ENCODE measurements at regions of chr1 and their contacts with region 1.

Region 1: DNA sequence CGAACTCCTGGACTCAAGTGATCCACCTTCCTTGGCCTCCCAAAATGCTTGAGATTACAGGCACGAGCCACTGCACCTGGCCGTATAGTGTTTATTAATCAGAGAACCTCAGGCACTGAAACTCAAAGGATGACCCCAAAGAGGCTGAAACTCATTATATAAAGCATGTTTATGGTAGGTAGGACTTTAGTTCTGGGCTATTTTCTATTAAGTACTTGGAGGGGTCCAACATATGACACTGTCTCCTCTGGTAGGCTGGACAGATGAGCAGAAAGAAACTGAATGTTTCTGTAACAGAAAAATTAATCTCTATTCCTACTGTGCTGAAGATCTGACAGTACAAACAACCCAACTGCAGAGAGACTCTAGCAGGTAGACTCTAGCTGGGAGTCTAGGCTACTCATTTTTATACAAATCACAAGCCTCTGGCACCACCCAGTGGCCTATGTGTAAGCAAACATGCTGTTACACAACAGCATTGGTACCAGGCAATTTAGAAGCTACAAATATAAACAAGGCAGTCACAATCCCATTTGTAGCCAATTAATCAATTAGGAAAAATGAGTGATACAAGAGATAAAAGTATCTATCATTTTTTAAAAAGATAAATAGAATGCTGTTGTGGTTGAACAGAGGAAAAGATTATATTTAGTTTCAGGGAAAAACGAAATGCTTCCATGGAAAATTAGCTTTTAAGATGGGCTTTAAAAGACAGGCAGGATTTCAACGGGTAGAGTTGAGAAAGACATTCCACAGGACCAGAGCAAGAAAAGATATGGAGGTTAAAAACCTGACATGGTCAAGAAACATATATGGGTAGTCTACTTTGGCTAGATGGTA is 10.4 kb downstream of the DCAF8 start:
- DNase-seq: peak; percentile 61
- H3K4me3 Mint-ChIP-seq: no peak overlapping the region
- H3K27ac Mint-ChIP-seq: no peak overlapping the region
- H3K4me1 Mint-ChIP-seq: peaks cover 7% of the 10 kb centered on the region
- H3K27me3 Mint-ChIP-seq: no peaks in the 10 kb centered on the region
- CTCF ChIP-seq: peak; percentile 70

Region 2: GRCh38 chr1:159996653-159997052 is 255.3 kb before region 1 on chr1:
- CTCF ChIA-PET with region 1: no interaction called
- intact Hi-C with region 1: no loop called
- DNase-seq: peak; percentile 16
- H3K4me3 Mint-ChIP-seq: no peak overlapping the region
- H3K27ac Mint-ChIP-seq: no peak overlapping the region
- H3K4me1 Mint-ChIP-seq: peaks cover 9% of the 10 kb centered on the region
- H3K27me3 Mint-ChIP-seq: peaks cover 31% of the 10 kb centered on the region
- CTCF ChIP-seq: no peak

Region 3: DNA sequence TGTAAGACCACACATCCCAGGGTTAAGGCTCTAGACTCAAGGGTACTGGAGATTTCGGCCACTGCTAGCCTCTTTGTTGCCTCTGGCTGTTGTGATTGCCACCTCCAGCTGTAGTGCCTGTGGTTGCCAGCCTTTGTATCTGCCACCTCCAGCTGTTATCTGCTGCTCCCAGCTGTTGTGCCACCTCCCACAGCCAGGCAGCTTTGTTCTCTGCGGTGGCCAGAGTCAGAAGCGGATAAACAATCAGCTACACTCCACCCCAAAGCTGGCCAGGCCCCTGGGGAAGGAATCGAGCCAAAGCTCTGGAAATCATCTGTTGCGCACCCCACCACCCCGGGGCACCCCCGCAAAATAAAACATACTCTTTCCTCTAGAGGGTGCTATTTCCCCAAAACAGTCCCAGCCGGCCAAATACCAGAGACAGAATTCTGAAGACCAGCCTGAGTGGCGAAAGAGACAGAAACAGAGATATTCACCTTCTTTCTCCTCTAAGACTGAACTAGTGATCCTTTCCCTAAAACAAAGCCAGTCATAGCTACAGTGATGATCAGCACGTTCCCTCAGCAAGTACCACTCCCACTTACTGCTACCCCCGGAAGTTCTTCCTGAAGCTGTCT is 205.3 kb before region 1 on chr1:
- CTCF ChIA-PET with region 1: no interaction called
- intact Hi-C with region 1: loop called (anchors 1 kb)
- DNase-seq: peak; percentile 37
- H3K4me3 Mint-ChIP-seq: peak overlapping the region; percentile 9
- H3K27ac Mint-ChIP-seq: no peak overlapping the region
- H3K4me1 Mint-ChIP-seq: peaks cover 8% of the 10 kb centered on the region
- H3K27me3 Mint-ChIP-seq: peaks cover 84% of the 10 kb centered on the region
- CTCF ChIP-seq: peak; percentile 66

Region 4: DNA sequence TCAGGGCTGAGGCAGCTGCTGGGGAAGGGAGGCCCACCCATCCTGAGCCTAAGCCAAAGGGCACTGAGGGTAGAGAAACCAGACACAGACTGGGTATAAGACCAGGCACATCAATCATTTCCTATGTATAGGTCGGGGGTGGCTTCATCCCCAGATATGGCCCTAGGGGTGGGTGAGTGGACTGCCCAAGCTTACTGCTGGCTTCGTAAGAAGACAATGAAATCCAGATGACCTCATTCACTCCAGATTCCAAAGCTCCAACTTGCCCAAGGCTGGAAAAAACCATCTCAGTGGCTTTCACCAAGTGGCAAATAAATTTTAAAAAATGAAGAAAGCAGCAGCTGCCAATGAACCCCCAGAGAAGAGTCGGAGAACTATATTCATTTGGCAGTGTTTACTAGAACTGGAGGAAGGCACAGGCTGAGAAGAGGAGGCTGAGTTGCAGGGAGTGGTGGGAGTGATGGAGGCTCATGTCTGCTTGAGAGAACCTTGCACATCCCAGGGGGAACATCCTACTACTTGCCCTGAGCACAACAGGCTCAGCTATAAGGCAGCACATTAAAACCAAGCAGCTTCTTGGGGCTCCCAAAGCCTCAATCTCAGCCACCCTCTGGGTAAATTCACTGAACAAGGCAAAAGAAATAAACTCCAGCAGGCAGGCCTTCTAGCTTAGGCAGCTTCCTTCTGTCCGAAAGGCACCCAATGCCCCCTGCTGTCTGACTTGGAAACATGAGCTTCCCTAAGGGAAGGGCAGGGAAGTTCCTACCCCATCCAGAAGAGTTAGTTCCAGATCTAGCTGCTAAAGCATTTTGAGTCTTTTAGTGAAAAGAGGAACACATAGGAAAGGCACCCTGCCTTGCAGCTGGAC is 32.6 kb before region 1 on chr1:
- CTCF ChIA-PET with region 1: interaction called, 12 read pairs
- intact Hi-C with region 1: no loop called
- DNase-seq: peak; percentile 60
- H3K4me3 Mint-ChIP-seq: no peak overlapping the region
- H3K27ac Mint-ChIP-seq: no peak overlapping the region
- H3K4me1 Mint-ChIP-seq: no peaks in the 10 kb centered on the region
- H3K27me3 Mint-ChIP-seq: no peaks in the 10 kb centered on the region
- CTCF ChIP-seq: peak; percentile 36

Region 5: DNA sequence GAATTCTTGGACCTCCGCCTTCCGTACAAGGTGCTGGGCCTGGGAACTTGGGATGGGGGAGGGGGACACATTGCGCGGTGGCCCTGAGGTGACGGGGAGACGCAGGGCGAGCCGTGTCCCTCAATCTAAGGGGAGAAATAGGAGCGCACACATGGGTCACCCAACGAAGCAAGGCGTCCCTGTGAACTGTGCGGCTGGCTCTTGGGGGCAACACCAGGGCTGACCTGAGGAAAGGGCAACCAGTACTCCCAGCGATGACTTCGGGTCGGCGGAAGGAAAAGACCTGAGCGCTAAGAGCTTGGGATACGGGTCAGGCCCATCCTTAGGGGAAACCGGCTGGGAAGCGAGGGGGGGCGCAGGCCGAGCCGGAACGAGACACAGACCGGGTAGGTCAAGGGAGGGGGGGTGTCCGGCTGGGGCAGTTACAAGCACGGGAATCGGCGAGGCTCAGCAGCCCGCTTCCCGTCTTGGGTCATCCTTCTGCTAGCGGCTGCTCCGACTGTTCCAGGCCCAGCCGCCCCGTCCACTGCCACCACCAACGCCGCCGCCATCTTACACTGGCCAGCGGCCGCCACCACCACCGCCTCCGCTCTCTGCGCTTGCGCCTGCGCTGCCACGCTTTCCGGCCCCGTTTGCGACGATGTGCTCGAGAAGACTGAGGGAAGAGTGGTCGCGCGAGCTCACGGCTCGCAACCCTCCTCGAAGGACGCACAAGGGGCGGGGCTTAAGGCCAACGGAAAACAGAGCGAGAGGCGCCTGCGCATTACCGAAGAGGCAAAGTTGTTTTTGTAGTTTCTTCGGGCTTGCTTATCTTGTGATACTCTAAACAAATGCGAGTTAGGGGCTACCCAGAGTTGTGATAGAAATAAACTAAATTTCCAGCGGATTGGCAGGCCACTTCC is 10.2 kb after region 1 on chr1 and contains the start of gene DCAF8:
- CTCF ChIA-PET with region 1: interaction called, 11 read pairs
- intact Hi-C with region 1: no loop called
- DNase-seq: peak; percentile 98
- H3K4me3 Mint-ChIP-seq: peak within 1 kb of the TSS; percentile 93
- H3K27ac Mint-ChIP-seq: peak within 1 kb of the TSS; percentile 98
- H3K4me1 Mint-ChIP-seq: peaks cover 12% of the 10 kb centered on the region
- H3K27me3 Mint-ChIP-seq: peaks cover 5% of the 10 kb centered on the region
- CTCF ChIP-seq: no peak
- total RNA-seq, gene DCAF8: 119 and 126 TPM in 2 replicates

Region 6: DNA sequence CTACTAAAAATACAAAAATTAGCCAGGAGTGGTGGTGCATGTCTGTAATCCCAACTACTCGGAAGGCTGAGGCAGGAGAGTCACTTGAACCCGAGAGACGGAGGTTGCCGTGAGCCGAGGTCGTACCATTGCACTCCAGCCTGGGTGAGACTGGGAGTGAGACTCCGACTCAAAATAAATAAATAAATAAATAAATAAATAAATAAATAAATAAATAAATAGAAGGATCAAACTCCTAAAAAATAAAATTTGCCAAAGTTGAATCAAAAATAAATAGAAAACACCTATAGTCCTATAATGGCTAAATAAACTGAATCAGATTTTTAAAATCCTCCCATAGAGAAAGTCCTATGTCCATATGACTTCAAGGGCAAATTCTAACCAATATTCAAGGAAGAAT is 48.3 kb after region 1 on chr1:
- CTCF ChIA-PET with region 1: no interaction called
- intact Hi-C with region 1: no loop called
- DNase-seq: no peak
- H3K4me3 Mint-ChIP-seq: no peak overlapping the region
- H3K27ac Mint-ChIP-seq: no peak overlapping the region
- H3K4me1 Mint-ChIP-seq: no peaks in the 10 kb centered on the region
- H3K27me3 Mint-ChIP-seq: no peaks in the 10 kb centered on the region
- CTCF ChIP-seq: no peak